Activated CD8-positive, alpha-beta T cell treated with anti-CD3 and anti-CD28 coated beads for 36 hours (primary cell): ENCODE measurements at regions of chr19 and their contacts with region 1.

Region 1: GRCh38 chr19:3102228-3103140 is 8.3 kb downstream of the GNA11 start:
- DNase-seq: no peak
- ATAC-seq: no peak
- H3K4me3 Mint-ChIP-seq: no peak overlapping the region
- H3K27ac Mint-ChIP-seq: no peak overlapping the region
- H3K4me1 Mint-ChIP-seq: peaks cover 23% of the 10 kb centered on the region
- H3K27me3 Mint-ChIP-seq: no peaks in the 10 kb centered on the region
- CTCF ChIP-seq: no peak

Region 2: GRCh38 chr19:2962045-2962561 is 140.4 kb before region 1 on chr19:
- CTCF ChIA-PET with region 1: interaction called, 21 read pairs
- POLR2A ChIA-PET with region 1: interaction called, 3 read pairs
- intact Hi-C with region 1: loop called (anchors 10 kb)
- DNase-seq: peak; percentile 65
- ATAC-seq: peak; percentile 84
- H3K4me3 Mint-ChIP-seq: no peak overlapping the region
- H3K27ac Mint-ChIP-seq: no peak overlapping the region
- H3K4me1 Mint-ChIP-seq: peaks cover 3% of the 10 kb centered on the region
- H3K27me3 Mint-ChIP-seq: no peaks in the 10 kb centered on the region
- CTCF ChIP-seq: peak; percentile 81

Region 3: GRCh38 chr19:2977001-2977685 is 125.3 kb before region 1 on chr19 and contains the start of gene TLE6:
- CTCF ChIA-PET with region 1: interaction called, 14 read pairs
- POLR2A ChIA-PET with region 1: no interaction called
- intact Hi-C with region 1: no loop called
- DNase-seq: peak; percentile 97
- ATAC-seq: peak; percentile 99
- H3K4me3 Mint-ChIP-seq: peak within 1 kb of the TSS; percentile 82
- H3K27ac Mint-ChIP-seq: peak within 1 kb of the TSS; percentile 83
- H3K4me1 Mint-ChIP-seq: peaks cover 18% of the 10 kb centered on the region
- H3K27me3 Mint-ChIP-seq: peaks cover 5% of the 10 kb centered on the region
- CTCF ChIP-seq: no peak
- total RNA-seq, gene TLE6: 3.5 to 5.1 TPM

Region 4: DNA sequence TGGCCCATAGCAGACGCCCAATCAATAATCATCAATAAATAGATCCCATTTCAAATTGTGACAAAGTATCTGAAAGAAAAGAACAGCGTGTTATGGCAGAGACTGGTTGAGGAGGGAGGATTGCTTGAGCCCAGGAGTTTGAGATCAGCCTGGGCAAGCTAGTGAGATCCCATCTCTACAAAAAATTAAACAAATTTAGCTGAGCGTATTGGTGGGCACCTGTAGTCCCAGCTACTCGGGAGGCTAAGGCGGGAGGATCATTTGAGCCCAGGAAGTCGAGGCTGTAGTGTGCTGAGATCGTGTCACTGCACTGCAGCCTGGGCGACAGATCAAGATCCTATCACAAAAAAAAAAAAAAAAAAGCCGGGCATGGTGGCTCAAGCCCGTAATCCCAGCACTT is 14.7 kb before region 1 on chr19:
- CTCF ChIA-PET with region 1: interaction called, 179 read pairs
- POLR2A ChIA-PET with region 1: no interaction called
- intact Hi-C with region 1: no loop called
- DNase-seq: no peak
- ATAC-seq: no peak
- H3K4me3 Mint-ChIP-seq: no peak overlapping the region
- H3K27ac Mint-ChIP-seq: no peak overlapping the region
- H3K4me1 Mint-ChIP-seq: no peaks in the 10 kb centered on the region
- H3K27me3 Mint-ChIP-seq: no peaks in the 10 kb centered on the region
- CTCF ChIP-seq: no peak

Region 5: GRCh38 chr19:3125900-3126524 is 23.5 kb after region 1 on chr19:
- CTCF ChIA-PET with region 1: interaction called, 21 read pairs
- POLR2A ChIA-PET with region 1: no interaction called
- intact Hi-C with region 1: no loop called
- DNase-seq: peak; percentile 76
- ATAC-seq: peak; percentile 99
- H3K4me3 Mint-ChIP-seq: no peak overlapping the region
- H3K27ac Mint-ChIP-seq: no peak overlapping the region
- H3K4me1 Mint-ChIP-seq: peaks cover 7% of the 10 kb centered on the region
- H3K27me3 Mint-ChIP-seq: no peaks in the 10 kb centered on the region
- CTCF ChIP-seq: peak; percentile 83

Region 6: DNA sequence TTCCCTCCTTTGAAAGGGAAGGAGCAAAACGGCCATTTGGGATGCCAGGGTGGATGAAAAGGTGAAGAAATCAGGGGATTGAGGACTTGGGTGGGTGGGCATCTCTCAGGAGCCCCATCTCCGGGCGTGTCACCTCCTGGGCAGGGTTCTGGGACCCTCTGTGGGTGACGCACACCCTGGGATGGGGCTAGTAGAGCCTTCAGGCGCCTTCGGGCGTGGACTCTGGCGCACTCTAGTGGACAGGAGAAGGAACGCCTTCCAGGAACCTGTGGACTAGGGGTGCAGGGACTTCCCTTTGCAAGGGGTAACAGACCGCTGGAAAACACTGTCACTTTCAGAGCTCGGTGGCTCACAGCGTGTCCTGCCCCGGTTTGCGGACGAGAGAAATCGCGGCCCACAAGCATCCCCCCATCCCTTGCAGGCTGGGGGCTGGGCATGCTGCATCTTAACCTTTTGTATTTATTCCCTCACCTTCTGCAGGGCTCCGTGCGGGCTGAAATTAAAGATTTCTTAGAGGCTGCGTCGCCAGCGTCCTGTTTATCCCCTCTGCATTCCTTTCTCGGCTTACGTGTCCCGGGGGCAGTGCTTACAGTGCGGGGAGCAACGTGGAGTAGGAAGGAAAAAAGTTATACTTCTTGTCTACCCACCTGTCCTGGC is 60.9 kb after region 1 on chr19:
- CTCF ChIA-PET with region 1: interaction called, 16 read pairs
- POLR2A ChIA-PET with region 1: no interaction called
- intact Hi-C with region 1: no loop called
- DNase-seq: peak; percentile 74
- ATAC-seq: peak; percentile 88
- H3K4me3 Mint-ChIP-seq: no peak overlapping the region
- H3K27ac Mint-ChIP-seq: no peak overlapping the region
- H3K4me1 Mint-ChIP-seq: peaks cover 18% of the 10 kb centered on the region
- H3K27me3 Mint-ChIP-seq: no peaks in the 10 kb centered on the region
- CTCF ChIP-seq: peak; percentile 97

Region 7: GRCh38 chr19:3360421-3361383 is 258.2 kb after region 1 on chr19:
- CTCF ChIA-PET with region 1: no interaction called
- POLR2A ChIA-PET with region 1: no interaction called
- intact Hi-C with region 1: no loop called
- DNase-seq: peak; percentile 75
- ATAC-seq: peak; percentile 45
- H3K4me3 Mint-ChIP-seq: peak overlapping the region; percentile 88
- H3K27ac Mint-ChIP-seq: peak overlapping the region; percentile 88
- H3K4me1 Mint-ChIP-seq: peaks cover 40% of the 10 kb centered on the region
- H3K27me3 Mint-ChIP-seq: peaks cover 1% of the 10 kb centered on the region
- CTCF ChIP-seq: no peak